ENCODE measurements at regions of chr9 and their contacts with region 1.

Region 1: DNA sequence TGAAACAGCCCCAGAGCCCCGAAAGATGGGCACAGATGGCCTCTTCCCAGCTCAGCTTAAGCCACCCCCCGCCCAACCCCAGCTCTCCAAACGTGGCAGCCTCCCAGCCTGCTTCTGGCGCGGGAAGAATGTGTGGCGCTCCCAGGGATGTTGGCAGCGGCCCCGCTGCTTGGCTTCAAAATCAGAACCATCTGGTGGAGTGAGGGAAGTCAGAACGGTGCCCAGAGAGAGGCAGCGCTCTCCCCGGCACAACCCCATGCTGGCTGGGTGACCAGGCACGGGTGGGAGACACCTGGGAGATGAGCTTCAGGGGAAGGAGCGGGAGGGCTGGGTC is 72.7 kb upstream of the ORM1 start:
- DNase-seq: peak; percentile 68 to 90 (median 83)
- H3K4me3 ChIP-seq: no peak overlapping the region
- H3K27ac ChIP-seq: peak overlapping the region in 1 of 2 donors; percentile 23
- H3K4me1 ChIP-seq: no peaks in the 10 kb centered on the region
- H3K27me3 ChIP-seq: no peaks in the 10 kb centered on the region
- CTCF ChIP-seq: no peak
- EP300 ChIP-seq: no peak
- POLR2A ChIP-seq: no peak

Region 2: DNA sequence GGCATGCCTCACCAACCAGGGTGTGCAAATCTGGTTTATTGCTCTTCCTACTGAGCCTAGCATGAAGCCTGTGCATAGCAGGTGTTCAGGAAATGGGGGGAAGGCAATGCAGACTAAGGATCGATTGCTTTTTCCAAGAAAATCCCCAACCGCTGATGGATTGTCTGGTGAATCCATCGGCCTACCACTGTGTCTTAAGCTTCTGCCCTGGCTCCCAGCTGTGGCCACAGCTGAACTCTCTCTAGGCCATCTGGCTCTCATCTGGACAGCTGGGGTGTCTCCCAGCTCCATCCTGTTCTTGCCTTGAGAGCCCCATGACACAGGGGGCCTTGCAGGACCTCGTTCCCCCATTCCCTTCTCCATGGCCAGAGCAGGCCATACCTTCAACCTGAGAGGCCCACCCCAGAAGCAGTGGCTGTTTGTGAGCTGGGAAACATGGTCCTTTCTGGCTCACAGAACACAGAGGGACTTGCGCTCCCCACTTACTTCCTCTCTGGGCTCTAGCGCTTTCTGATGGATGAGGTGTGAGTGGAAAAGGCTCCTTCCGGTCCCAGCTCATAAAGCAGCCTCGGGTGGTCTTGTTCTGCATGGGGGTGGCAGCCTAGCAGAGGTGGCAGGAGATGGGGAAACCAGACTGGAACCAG is 53.1 kb before region 1 on chr9:
- intact Hi-C with region 1: loop called in 1 of 4 experiments (anchors 10 kb)
- DNase-seq: no peak
- H3K4me3 ChIP-seq: no peak overlapping the region
- H3K27ac ChIP-seq: no peak overlapping the region
- H3K4me1 ChIP-seq: peaks cover 2% of the 10 kb centered on the region
- H3K27me3 ChIP-seq: no peaks in the 10 kb centered on the region
- CTCF ChIP-seq: no peak
- EP300 ChIP-seq: no peak
- POLR2A ChIP-seq: no peak

Measured in ovary (tissue), 10 donors.